ENCODE measurements at regions of chr1 and their contacts with region 1.

Region 1: GRCh38 chr1:66316464-66317247 is 217.3 kb upstream of the SGIP1 start:
- DNase-seq: no peak
- H3K4me3 ChIP-seq: no peak overlapping the region
- H3K27ac ChIP-seq: peak overlapping the region; percentile 70 to 78
- H3K4me1 ChIP-seq: no peaks in the 10 kb centered on the region
- H3K27me3 ChIP-seq: no peaks in the 10 kb centered on the region
- CTCF ChIP-seq: no peak
- POLR2A ChIP-seq: no peak

Region 2: GRCh38 chr1:66292944-66293343 is 23.7 kb before region 1 on chr1:
- intact Hi-C with region 1: loop called (anchors 1 kb)
- DNase-seq: no peak
- H3K4me3 ChIP-seq: no peak overlapping the region
- H3K27ac ChIP-seq: peak overlapping the region in 1 of 2 donors; percentile 87
- H3K4me1 ChIP-seq: peaks cover 0 to 7% of the 10 kb centered on the region in 2 donors
- H3K27me3 ChIP-seq: no peaks in the 10 kb centered on the region
- CTCF ChIP-seq: no peak
- POLR2A ChIP-seq: no peak